ENCODE measurements at regions of chr13 and their contacts with region 1.

Region 1: DNA sequence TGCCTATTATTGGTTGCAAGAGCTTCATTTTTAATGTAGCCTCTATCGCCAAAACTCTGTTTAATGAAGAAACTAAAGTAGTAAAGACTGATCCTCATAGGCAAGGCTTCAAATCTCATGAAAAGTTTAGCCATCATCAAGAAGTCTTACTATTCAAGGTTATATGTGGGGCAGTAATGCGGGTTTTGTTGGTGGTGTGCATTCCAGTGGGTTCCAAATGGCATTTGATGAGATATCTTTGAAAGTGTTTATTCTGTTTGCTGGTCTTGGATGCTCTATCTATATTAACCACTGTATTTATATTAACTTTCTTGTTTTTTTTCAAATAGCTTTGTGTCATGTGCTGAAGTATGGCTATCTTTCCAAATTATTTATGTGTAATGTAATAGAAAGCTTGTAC is 72.2 kb downstream of the SERTM1 start:
- DNase-seq: no peak
- H3K4me3 Mint-ChIP-seq: no peak overlapping the region
- H3K27ac Mint-ChIP-seq: no peak overlapping the region
- H3K4me1 Mint-ChIP-seq: no peaks in the 10 kb centered on the region
- H3K27me3 Mint-ChIP-seq: peaks cover 2% of the 10 kb centered on the region

Region 2: DNA sequence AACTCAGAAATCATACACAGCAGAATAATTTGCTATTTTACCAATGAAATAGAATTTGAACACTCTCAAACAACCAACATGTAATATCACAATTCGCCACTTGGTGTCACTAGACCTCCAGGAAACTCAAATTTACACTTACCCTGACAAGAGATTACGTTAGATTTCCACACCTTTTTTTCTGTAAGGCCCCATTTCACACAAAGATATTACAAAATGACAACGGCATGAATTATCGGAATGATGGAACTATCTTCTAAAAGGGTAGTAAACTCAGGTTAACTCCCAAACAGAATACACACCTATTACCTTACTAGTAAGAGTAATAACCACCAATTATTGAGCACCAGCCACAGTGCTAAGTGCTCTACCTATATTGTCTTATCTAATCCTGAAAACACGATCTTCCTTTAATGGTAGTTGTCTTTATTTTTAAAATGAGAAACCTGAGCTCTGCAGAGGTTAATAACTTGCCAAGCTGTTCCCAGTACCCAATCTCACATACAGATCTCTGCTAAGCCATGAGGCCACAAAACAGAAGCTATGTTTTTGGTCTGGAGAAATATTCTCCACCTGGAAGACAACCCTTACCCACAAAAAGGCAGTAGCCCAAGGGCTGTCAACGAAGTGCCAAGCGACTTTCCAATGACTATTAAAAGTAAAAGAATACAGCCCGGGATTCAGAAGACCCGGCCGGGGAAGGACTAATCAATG is 767.3 kb before region 1 on chr13:
- intact Hi-C with region 1: loop called (anchors 10 kb)
- DNase-seq: no peak
- H3K4me3 Mint-ChIP-seq: no peak overlapping the region
- H3K27ac Mint-ChIP-seq: no peak overlapping the region
- H3K4me1 Mint-ChIP-seq: no peaks in the 10 kb centered on the region
- H3K27me3 Mint-ChIP-seq: no peaks in the 10 kb centered on the region

Region 3: DNA sequence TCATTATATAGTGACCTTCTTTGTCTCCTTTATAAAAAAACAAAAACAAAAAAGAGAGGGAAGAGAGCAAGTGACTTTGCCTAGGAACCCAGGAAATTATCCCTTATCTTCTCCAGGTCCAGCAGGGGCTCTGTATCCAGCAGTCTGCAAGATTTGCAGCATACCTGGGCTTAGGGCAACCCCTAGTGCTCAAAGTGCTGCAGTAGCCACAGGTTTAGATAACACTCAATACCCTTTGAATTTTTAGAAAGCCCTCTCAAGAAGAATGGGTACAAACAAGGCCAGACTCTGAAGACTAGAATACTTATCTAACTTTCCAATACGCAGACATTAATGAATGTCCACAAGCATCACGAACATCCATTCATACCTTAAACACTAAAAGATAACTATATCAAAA is 270.6 kb before region 1 on chr13:
- intact Hi-C with region 1: no loop called
- DNase-seq: no peak
- H3K4me3 Mint-ChIP-seq: no peak overlapping the region
- H3K27ac Mint-ChIP-seq: no peak overlapping the region
- H3K4me1 Mint-ChIP-seq: no peaks in the 10 kb centered on the region
- H3K27me3 Mint-ChIP-seq: peaks cover 13% of the 10 kb centered on the region

Measured in activated T-helper 1 cell treated with anti-CD3 and anti-CD28 coated beads, Interleukin-12 subunit alpha, Interleukin-12 subunit beta, Interleukin-2, Interleukin-4 antibody, amounts not matched to agents 30 ng/mL and 10 ng/mL and 1 ng/mL, durations not matched to agents 14 hours and 24 hours and 36 hours (primary cell).